OCI-LY7 (cell line): ENCODE measurements at regions of chrX and their contacts with region 1.

Region 1: GRCh38 chrX:119468930-119469635 is 839 bp downstream of the SLC25A5 start:
- DNase-seq: peak; percentile 87
- H3K4me3 ChIP-seq: peak overlapping the region; percentile 99
- H3K27ac ChIP-seq: peak overlapping the region; percentile 85
- H3K4me1 ChIP-seq: peaks cover 21% of the 10 kb centered on the region
- CTCF ChIP-seq: peak; percentile 73

Region 2: DNA sequence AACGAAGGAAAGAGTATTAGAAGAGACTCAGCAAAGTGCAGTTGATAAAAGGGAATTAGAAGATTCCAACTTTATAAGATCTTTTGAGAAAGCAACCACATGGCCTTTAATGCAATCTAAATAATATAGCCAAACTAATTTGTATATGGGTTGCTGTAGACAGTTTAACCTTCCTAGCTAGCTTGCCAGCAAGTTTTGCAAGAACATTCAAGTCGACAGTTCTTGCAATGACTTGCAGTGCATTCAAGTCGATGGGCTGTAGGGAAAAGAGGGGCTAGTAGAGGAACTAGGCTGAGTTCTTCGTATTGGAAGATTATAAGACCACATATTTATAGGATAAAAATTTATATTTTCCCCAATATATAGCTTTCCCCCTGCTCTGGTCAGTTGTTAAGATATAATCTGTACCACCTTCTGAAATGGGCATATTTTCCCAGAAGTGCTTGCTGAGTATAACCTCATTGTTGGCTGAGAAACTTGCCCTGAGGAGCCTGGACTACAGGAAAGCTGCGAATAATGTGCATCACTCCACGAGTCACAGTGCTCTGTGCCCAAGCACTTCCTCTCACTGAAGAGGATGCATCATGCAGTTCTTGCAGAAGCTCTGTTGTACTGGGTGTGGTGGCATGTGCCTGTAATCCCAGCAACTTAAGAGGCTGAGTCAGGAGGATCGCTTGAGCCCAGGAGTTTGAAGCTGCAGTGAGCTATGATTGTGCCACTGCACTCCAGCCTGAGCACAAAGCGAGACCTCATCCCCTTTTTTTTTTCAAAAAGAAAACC is 916.8 kb before region 1 on chrX:
- CTCF ChIA-PET with region 1: no interaction called
- POLR2A ChIA-PET with region 1: no interaction called
- intact Hi-C with region 1: no loop called
- DNase-seq: no peak
- H3K4me3 ChIP-seq: no peak overlapping the region
- H3K27ac ChIP-seq: no peak overlapping the region
- H3K4me1 ChIP-seq: no peaks in the 10 kb centered on the region
- CTCF ChIP-seq: no peak

Region 3: DNA sequence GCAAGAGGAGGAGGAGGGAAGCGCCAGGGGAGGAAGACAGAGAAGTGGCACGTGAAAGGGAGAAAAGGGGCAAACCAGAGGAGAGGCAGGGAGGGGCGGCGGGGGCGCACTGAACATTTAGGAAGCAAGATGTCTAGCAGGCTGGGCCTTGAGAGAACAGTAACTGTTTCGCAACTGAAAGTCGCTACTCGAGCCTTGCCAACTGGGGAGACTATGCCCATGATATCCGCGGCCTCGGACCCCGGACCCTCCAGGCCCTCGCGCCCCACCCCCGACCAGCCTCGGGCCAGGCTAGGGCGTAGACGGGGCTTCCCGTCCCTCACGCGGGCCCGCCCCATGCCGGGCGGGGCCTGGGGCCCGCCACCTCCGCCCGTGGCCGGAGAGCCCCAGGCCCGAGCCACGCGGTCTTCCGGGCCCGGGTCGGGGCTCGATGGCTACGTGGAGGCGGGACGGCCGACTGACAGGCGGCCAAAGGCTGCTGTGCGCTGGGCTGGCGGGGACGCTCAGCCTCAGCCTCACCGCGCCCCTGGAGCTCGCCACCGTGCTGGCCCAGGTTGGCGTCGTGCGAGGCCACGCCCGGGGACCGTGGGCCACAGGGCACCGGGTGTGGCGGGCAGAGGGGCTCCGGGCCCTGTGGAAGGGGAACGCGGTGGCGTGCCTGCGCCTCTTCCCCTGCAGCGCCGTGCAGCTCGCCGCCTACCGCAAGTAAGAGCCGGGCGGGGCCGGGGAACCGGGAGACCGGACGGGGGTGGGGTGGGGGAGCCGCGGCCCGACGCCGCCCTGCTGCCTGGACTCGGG is 69.9 kb before region 1 on chrX and contains the start of gene SLC25A43:
- CTCF ChIA-PET with region 1: no interaction called
- POLR2A ChIA-PET with region 1: no interaction called
- intact Hi-C with region 1: loop called (anchors 2 kb)
- DNase-seq: peak; percentile 71
- H3K4me3 ChIP-seq: peak within 1 kb of the TSS; percentile 85
- H3K27ac ChIP-seq: peak within 1 kb of the TSS; percentile 31
- H3K4me1 ChIP-seq: peaks cover 19% of the 10 kb centered on the region
- CTCF ChIP-seq: no peak
- total RNA-seq, gene SLC25A43: 10.6 and 13.7 TPM in 2 replicates

Region 4: GRCh38 chrX:119574394-119575266 is 105.5 kb after region 1 on chrX and contains the start of gene UBE2A:
- CTCF ChIA-PET with region 1: no interaction called
- POLR2A ChIA-PET with region 1: no interaction called
- intact Hi-C with region 1: loop called (anchors 2 kb)
- DNase-seq: peak; percentile 94
- H3K4me3 ChIP-seq: peak within 1 kb of the TSS; percentile 87
- H3K27ac ChIP-seq: peak within 1 kb of the TSS; percentile 73
- H3K4me1 ChIP-seq: peaks cover 32% of the 10 kb centered on the region
- CTCF ChIP-seq: peak; percentile 61
- total RNA-seq, gene UBE2A: 21.8 and 30.0 TPM in 2 replicates